CD4-positive, alpha-beta T cell (primary cell): ENCODE measurements at regions of chr13 and their contacts with region 1.

Region 1: GRCh38 chr13:60396783-60397703 is at the start of gene TDRD3:
- DNase-seq: peak; percentile 57 to 91 (median 70)
- ATAC-seq: peak; percentile 67
- H3K4me3 ChIP-seq: peak within 1 kb of the TSS; percentile 87
- H3K4me3 Mint-ChIP-seq: peak within 1 kb of the TSS; percentile 95
- H3K27ac ChIP-seq: peak within 1 kb of the TSS; percentile 82 to 88
- H3K27ac Mint-ChIP-seq: peak within 1 kb of the TSS; percentile 95
- H3K4me1 ChIP-seq: peaks cover 20% of the 10 kb centered on the region
- H3K4me1 Mint-ChIP-seq: peaks cover 39% of the 10 kb centered on the region
- H3K27me3 ChIP-seq: no peaks in the 10 kb centered on the region
- H3K27me3 Mint-ChIP-seq: no peaks in the 10 kb centered on the region
- CTCF ChIP-seq: peak; percentile 78
- total RNA-seq, gene TDRD3: 22.4 to 27.2 TPM

Region 2: DNA sequence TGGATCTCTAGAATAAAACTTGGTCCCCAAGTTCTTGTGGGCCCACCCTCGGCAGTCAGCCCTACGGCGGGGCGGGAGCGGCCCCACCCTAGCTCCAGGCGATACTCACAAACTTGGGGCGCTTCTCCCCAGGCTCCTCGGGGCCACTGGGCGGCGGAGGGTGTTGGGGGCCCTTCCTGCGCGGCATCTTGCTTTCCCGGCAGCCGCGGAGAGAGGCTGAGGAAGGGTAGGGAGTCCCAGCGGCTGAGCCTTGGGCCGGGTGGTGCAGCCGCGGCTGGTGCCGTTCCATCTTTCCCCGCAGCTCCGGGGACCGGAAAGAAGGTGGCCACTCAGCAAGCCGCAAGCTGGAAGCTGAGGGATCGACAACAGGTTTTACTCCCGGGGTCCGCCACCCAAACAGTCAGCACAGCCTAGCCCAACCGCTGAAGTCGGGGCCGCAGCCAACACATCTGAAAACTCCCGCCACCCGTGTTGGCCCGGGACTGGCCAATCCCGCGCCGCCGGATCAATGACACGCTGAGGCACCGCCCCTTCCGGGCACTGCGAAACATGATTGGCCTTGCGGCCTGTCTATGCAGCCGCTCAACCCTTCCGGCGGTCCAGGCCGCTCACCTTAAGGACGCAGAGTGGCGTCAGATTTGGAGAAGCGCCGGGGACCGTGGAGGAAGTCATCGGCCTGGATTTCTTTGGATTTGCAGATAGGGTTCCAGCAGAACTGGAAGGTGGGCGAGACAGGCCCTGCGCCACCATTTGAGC is 233.4 kb before region 1 on chr13 and contains the start of gene DIAPH3:
- CTCF ChIA-PET with region 1: interaction called, 3 read pairs
- POLR2A ChIA-PET with region 1: interaction called, 13 read pairs
- intact Hi-C with region 1: loop called (anchors 2 to 5 kb)
- DNase-seq: peak; percentile 85 to 94 (median 90)
- ATAC-seq: peak; percentile 97
- H3K4me3 ChIP-seq: peak within 1 kb of the TSS; percentile 71
- H3K4me3 Mint-ChIP-seq: peak within 1 kb of the TSS; percentile 88
- H3K27ac ChIP-seq: peak within 1 kb of the TSS; percentile 46 to 77
- H3K27ac Mint-ChIP-seq: peak within 1 kb of the TSS; percentile 89
- H3K4me1 ChIP-seq: peaks cover 13% of the 10 kb centered on the region
- H3K4me1 Mint-ChIP-seq: peaks cover 31% of the 10 kb centered on the region
- H3K27me3 ChIP-seq: no peaks in the 10 kb centered on the region
- H3K27me3 Mint-ChIP-seq: no peaks in the 10 kb centered on the region
- CTCF ChIP-seq: no peak
- total RNA-seq, gene DIAPH3: 0.08 to 0.11 TPM

Region 3: DNA sequence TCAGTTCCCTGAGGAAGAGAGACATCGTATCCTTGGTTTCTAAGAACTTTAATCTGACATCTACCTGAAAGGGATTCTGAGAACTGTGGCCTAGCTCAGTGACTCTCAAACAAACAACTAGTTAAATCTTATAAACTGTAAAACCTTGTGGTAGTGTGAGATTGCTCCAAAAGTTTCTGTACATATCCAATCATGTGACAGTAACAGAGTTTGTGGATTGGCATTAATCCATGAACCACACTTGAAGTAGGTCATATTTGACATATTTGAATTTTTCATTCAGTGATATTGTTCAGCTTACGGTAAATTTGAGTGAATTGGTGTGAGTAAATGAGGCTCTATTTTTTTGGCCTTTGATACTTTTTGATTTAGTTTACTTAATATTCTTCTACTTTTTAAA is 14.9 kb after region 1 on chr13:
- CTCF ChIA-PET with region 1: no interaction called
- POLR2A ChIA-PET with region 1: interaction called, 14 read pairs
- intact Hi-C with region 1: no loop called
- DNase-seq: no peak
- ATAC-seq: no peak
- H3K4me3 ChIP-seq: no peak overlapping the region
- H3K4me3 Mint-ChIP-seq: no peak overlapping the region
- H3K27ac ChIP-seq: no peak overlapping the region
- H3K27ac Mint-ChIP-seq: no peak overlapping the region
- H3K4me1 ChIP-seq: peaks cover 10% of the 10 kb centered on the region
- H3K4me1 Mint-ChIP-seq: peaks cover 69% of the 10 kb centered on the region
- H3K27me3 ChIP-seq: no peaks in the 10 kb centered on the region
- H3K27me3 Mint-ChIP-seq: no peaks in the 10 kb centered on the region
- CTCF ChIP-seq: no peak

Region 4: DNA sequence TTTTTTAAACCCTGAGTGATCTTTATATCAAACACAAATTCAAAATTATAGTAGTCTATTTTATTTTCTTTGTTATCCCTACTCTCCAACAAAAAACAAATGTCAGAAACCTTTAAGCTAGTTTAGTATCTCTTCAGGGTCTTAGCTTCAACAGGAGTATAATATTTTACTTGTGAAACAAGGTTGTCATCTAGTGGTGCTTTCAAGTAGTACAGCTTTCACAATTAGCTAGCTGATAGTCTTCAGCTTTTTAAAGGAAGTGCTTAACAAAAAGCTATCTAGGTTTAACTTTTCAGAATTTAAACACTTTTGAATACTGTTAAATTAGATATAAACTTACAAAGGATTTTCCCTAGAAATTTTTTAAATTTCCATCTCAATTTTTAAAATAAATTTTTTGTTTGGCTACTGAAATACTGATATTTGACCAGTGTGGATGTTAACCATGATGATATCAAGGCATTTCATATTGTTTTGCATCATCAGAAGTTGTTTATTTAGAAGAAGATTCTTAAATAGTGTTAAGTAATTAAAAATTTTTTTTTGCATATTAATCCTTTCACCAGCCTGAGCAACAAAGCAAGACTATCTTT is 34.2 kb after region 1 on chr13:
- CTCF ChIA-PET with region 1: no interaction called
- POLR2A ChIA-PET with region 1: interaction called, 6 read pairs
- intact Hi-C with region 1: loop called in 1 of 2 experiments (anchors 2 kb)
- DNase-seq: peak in 3 of 14 experiments; percentile 71 to 76 (median 75)
- ATAC-seq: peak; percentile 89
- H3K4me3 ChIP-seq: no peak overlapping the region
- H3K4me3 Mint-ChIP-seq: no peak overlapping the region
- H3K27ac ChIP-seq: no peak overlapping the region
- H3K27ac Mint-ChIP-seq: no peak overlapping the region
- H3K4me1 ChIP-seq: peaks cover 6% of the 10 kb centered on the region
- H3K4me1 Mint-ChIP-seq: peaks cover 43% of the 10 kb centered on the region
- H3K27me3 ChIP-seq: no peaks in the 10 kb centered on the region
- H3K27me3 Mint-ChIP-seq: no peaks in the 10 kb centered on the region
- CTCF ChIP-seq: peak; percentile 96

Region 5: DNA sequence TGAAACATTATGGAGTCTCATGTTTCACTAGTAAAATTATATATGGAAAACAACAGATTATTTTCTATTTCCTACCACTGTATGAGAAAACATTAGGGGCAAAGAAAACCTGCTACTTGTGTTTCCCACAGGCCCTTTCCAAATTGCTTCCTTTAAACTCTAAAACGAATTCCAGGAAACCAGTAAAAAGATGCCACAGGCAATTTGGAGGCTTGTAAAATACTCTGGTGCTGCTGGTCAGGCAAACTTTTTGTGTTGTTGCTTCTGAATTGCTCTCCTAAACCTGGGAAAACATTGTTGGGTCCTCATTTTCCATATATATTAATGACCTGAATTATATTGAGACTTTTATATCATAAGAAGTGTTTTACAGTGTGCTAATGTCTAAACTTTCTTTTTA is 141.5 kb after region 1 on chr13:
- CTCF ChIA-PET with region 1: no interaction called
- POLR2A ChIA-PET with region 1: no interaction called
- intact Hi-C with region 1: no loop called
- DNase-seq: no peak
- ATAC-seq: no peak
- H3K4me3 ChIP-seq: no peak overlapping the region
- H3K4me3 Mint-ChIP-seq: no peak overlapping the region
- H3K27ac ChIP-seq: no peak overlapping the region
- H3K27ac Mint-ChIP-seq: no peak overlapping the region
- H3K4me1 ChIP-seq: no peaks in the 10 kb centered on the region
- H3K4me1 Mint-ChIP-seq: no peaks in the 10 kb centered on the region
- H3K27me3 ChIP-seq: no peaks in the 10 kb centered on the region
- H3K27me3 Mint-ChIP-seq: no peaks in the 10 kb centered on the region
- CTCF ChIP-seq: no peak